ENCODE measurements at regions of chr1 and their contacts with region 1.

Region 1: DNA sequence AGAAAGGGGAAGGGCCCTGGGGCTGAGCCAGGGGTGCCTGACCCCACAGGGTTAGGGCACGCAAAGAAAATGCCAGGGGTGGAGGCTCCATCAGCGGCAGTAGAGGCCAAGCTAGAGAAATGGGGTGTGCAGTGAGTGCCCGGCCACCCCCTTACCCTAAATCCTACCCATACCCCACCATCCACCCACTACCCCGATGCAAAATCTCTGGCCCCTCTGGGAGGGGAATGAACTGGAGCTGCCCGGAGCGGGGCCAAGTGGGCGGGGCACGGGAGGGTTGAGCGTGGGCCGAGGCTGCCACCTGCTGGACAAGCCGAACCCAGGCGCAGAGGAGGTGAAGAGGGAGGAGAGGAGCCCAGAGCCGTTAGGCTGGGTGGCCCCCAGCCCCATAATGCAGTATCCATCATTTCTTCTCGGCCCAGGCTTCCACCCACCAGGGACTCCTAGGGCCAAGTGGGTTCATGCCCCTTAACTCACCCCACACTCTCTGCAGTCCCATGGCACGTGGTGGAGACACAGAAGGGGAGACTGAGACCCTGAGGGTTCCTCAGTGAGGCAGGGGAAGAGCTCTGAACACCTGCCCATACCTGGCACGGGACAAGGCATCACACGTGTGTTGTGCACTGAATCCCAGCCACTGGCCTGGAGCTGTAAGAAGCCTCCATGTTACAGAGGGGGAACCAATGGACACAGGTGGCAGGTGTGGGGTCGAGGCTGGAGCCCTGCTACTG is 1.4 kb upstream of the C1QC start:
- DNase-seq: peak; percentile 91
- H3K4me3 ChIP-seq: peak overlapping the region in 1 of 8 donors; percentile 10
- H3K27ac ChIP-seq: peak overlapping the region in 5 of 8 donors; percentile 18 to 73 (median 54)
- H3K4me1 ChIP-seq: peaks cover 0 to 45% (median 9%) of the 10 kb centered on the region in 6 donors
- H3K27me3 ChIP-seq: peaks cover 0 to 55% (median 6%) of the 10 kb centered on the region in 7 donors
- CTCF ChIP-seq: peak; percentile 47 to 95 (median 91)
- POLR2A ChIP-seq: no peak

Region 2: GRCh38 chr1:22416555-22417454 is 225.3 kb before region 1 on chr1:
- intact Hi-C with region 1: loop called (anchors 5 kb)
- DNase-seq: peak; percentile 87
- H3K4me3 ChIP-seq: no peak overlapping the region
- H3K27ac ChIP-seq: no peak overlapping the region
- H3K4me1 ChIP-seq: peaks cover 3 to 11% (median 9%) of the 10 kb centered on the region in 6 donors
- H3K27me3 ChIP-seq: peaks cover 0 to 57% (median 10%) of the 10 kb centered on the region in 7 donors
- CTCF ChIP-seq: peak; percentile 47 to 90 (median 82)
- POLR2A ChIP-seq: no peak

Region 3: DNA sequence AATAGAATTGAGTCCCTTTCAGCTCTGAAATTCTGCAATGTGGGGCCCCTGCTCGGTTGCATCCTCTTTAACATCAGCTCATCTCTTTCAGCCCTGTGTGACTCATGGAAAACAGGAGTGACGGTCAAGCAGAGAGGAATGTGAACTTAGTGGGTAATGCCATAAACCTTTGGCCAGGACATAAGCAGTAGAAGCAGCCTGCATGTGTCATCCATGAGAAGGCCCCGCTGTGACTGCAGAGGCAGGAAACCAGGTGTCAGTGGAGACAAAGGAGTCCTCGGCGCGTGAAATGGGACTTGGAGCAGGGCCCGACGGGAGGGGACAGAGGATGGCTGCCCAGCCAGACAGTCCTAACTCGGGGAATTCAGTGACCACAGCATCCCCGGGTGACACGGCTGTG is 47.4 kb after region 1 on chr1:
- intact Hi-C with region 1: no loop called
- DNase-seq: no peak
- H3K4me3 ChIP-seq: no peak overlapping the region
- H3K27ac ChIP-seq: no peak overlapping the region
- H3K4me1 ChIP-seq: no peaks in the 10 kb centered on the region
- H3K27me3 ChIP-seq: peaks cover 0 to 19% (median 0%) of the 10 kb centered on the region in 7 donors
- CTCF ChIP-seq: no peak
- POLR2A ChIP-seq: no peak

Measured in spleen (tissue), 13 donors.